Activated T-helper 2 cell treated with anti-CD3 and anti-CD28 coated beads, Interferon-gamma antibody, Interleukin-2, Interleukin-4, amounts not matched to agents 10 μg/mL and 5 μg/mL and 100 μg/mL, durations not matched to agents 14 hours and 24 hours and 36 hours (primary cell): ENCODE measurements at regions of chr3 and their contacts with region 1.

Region 1: DNA sequence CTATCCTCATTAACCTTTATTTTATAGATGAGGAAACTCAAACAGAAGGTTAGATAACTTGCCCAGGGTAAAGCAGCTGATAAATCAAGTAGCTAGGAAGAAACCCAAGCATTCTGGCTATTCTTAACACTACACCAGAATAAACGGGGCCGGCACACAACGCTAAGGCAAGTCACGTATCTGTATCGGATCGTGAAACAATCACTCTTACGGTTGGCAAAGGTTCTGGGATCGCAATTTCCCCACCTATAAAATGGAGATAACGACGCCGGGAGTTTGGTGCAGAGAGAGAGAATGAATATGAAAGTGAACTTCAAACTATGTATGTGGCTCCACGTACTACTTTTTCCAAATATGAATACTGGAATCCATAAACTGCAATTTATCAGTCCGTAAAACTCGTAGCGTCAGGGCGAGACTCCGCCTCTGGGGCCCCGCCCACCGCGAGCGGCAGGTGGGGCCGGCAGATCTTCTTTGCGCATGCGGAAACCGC is 252 bp upstream of the ARMC8 start:
- DNase-seq: peak; percentile 84
- H3K4me3 Mint-ChIP-seq: peak overlapping the region; percentile 90
- H3K27ac Mint-ChIP-seq: peak overlapping the region; percentile 91
- H3K4me1 Mint-ChIP-seq: peaks cover 25% of the 10 kb centered on the region
- H3K27me3 Mint-ChIP-seq: peaks cover 20% of the 10 kb centered on the region

Region 2: DNA sequence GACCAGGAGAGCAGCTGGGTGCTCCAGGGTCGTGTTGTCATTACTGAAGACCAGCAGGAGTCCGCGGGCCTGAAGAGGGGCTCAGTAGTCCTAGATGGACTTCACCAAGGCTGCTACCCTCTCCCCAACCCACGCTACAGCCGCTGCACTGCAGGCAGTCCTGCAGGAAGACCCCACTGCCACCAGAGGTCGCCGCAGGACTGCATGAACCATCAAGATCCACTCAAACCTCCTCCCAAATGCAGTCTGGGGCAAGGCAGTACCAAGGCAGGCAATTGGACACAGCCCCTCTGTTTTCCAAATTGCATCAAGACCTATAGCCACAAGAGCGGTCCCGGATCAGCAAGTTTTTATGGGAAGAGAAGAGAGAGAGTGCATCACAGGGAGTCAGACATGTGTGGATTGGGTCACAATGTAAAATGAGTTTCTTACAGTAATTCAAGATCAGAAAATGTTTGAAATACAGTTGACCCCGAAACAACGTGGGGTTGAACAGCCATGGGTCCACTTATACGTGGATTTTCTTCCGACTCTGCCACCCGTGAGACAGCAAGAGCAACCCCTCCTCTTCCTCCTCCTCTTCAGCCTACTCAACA is 118.2 kb before region 1 on chr3:
- intact Hi-C with region 1: loop called (anchors 5 kb)
- DNase-seq: peak; percentile 55
- H3K4me3 Mint-ChIP-seq: no peak overlapping the region
- H3K27ac Mint-ChIP-seq: no peak overlapping the region
- H3K4me1 Mint-ChIP-seq: peaks cover 23% of the 10 kb centered on the region
- H3K27me3 Mint-ChIP-seq: peaks cover 29% of the 10 kb centered on the region

Region 3: GRCh38 chr3:138206196-138206595 is 19.3 kb after region 1 on chr3:
- intact Hi-C with region 1: no loop called
- DNase-seq: no peak
- H3K4me3 Mint-ChIP-seq: no peak overlapping the region
- H3K27ac Mint-ChIP-seq: no peak overlapping the region
- H3K4me1 Mint-ChIP-seq: peaks cover 2% of the 10 kb centered on the region
- H3K27me3 Mint-ChIP-seq: no peaks in the 10 kb centered on the region

Region 4: DNA sequence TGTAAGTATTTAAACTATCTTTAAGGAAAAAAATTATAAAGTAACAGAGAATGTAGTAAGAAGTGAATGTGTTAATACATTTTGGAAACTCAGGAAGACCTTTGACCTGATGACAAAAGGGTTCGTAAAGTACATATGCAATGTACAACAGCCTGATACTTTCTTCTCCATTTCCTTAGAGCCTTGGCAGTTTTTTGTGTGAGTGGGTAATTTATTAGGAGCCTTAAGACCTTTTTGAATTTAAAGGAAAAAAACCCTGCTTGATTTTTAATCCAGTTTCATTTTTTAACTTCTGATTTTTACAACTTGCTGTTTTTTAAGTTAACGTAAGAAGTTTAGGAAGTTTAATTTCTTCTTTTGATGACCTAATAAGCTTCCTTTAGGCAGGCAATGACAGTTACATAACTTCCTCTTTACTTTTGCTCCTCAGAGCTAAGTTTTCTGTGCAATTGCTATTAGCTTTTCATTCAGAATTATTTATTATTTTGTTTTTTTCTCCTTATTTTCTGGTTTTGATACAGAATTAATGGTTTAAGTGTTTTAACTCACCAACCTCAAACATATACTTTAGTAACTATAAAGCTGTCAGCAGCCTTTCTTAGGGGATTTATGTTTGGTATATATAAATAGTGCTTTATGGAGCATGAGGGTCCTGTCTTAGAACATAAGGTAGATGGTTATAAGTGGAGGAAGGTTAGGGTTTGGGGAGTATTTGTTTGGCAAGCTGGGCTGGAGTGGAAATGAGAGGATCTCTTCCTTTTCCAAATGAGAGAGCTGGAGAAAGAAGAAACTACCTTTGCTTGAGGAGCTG is 35.5 kb after region 1 on chr3:
- intact Hi-C with region 1: loop called (anchors 5 kb)
- DNase-seq: no peak
- H3K4me3 Mint-ChIP-seq: no peak overlapping the region
- H3K27ac Mint-ChIP-seq: peak overlapping the region; percentile 59
- H3K4me1 Mint-ChIP-seq: peaks cover 23% of the 10 kb centered on the region
- H3K27me3 Mint-ChIP-seq: no peaks in the 10 kb centered on the region

Region 5: GRCh38 chr3:138329127-138329983 is 142.5 kb after region 1 on chr3 and contains the start of gene NME9:
- intact Hi-C with region 1: loop called (anchors 1 kb)
- DNase-seq: peak; percentile 77
- H3K4me3 Mint-ChIP-seq: peak within 1 kb of the TSS; percentile 83
- H3K27ac Mint-ChIP-seq: peak within 1 kb of the TSS; percentile 63
- H3K4me1 Mint-ChIP-seq: peaks cover 19% of the 10 kb centered on the region
- H3K27me3 Mint-ChIP-seq: peaks cover 13% of the 10 kb centered on the region
- total RNA-seq, gene NME9: 0.30 TPM in 1 of 2 replicates, not detected in the other

Region 6: GRCh38 chr3:138834359-138835212 is 647.7 kb after region 1 on chr3 and contains the start of gene PIK3CB:
- intact Hi-C with region 1: loop called (anchors 5 kb)
- DNase-seq: peak; percentile 77
- H3K4me3 Mint-ChIP-seq: peak within 1 kb of the TSS; percentile 96
- H3K27ac Mint-ChIP-seq: peak within 1 kb of the TSS; percentile 94
- H3K4me1 Mint-ChIP-seq: peaks cover 16% of the 10 kb centered on the region
- H3K27me3 Mint-ChIP-seq: no peaks in the 10 kb centered on the region
- total RNA-seq, gene PIK3CB: 19.2 and 20.3 TPM in 2 replicates